Activated naive CD4-positive, alpha-beta T cell treated with anti-CD3 and anti-CD28 coated beads, Interleukin-2, amount 10 ng/mL, durations not matched to agents 7 days and 5 days (primary cell): ENCODE measurements at regions of chr1 and their contacts with region 1.

Region 1: DNA sequence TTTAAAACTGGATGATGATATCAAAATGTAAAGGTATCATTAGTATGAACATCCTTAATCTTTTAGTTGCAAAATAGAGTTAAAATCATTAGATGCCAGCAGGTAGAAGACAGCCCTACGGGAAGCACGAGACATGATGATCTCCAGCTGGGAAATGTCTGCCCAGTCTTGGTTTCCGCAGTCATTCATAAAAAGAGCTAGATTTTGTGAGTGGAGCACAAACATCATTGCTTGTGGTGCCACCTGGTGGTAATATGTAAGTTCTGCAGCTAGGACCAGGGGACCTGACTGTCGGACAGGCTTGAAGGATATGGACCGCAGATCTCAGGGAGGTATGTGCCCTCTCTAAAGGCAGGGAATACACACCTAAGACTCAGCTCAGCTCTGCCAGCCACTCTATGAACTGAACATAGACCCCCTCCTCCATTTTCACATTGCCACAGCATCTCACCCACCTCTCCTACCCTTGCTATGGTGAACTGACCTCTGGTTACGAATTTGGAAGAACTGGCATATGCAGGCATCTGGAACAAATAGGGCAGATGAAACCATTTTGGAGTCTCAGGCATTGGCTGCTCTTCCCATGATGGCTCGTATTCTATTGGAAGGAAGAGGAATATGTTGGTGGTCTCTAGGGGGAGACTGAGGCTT is 9.2 kb downstream of the FCMR start:
- DNase-seq: peak; percentile 75
- H3K4me3 Mint-ChIP-seq: no peak overlapping the region
- H3K27ac Mint-ChIP-seq: peak overlapping the region; percentile 28
- H3K4me1 Mint-ChIP-seq: peaks cover 91% of the 10 kb centered on the region
- H3K27me3 Mint-ChIP-seq: no peaks in the 10 kb centered on the region

Region 2: GRCh38 chr1:206635080-206635977 is 277.2 kb before region 1 on chr1 and contains the start of gene DYRK3:
- CTCF ChIA-PET with region 1: interaction called, 12 read pairs
- DNase-seq: peak; percentile 96
- H3K4me3 Mint-ChIP-seq: peak within 1 kb of the TSS; percentile 77
- H3K27ac Mint-ChIP-seq: peak within 1 kb of the TSS; percentile 85
- H3K4me1 Mint-ChIP-seq: peaks cover 26% of the 10 kb centered on the region
- H3K27me3 Mint-ChIP-seq: peaks cover 38% of the 10 kb centered on the region

Region 3: DNA sequence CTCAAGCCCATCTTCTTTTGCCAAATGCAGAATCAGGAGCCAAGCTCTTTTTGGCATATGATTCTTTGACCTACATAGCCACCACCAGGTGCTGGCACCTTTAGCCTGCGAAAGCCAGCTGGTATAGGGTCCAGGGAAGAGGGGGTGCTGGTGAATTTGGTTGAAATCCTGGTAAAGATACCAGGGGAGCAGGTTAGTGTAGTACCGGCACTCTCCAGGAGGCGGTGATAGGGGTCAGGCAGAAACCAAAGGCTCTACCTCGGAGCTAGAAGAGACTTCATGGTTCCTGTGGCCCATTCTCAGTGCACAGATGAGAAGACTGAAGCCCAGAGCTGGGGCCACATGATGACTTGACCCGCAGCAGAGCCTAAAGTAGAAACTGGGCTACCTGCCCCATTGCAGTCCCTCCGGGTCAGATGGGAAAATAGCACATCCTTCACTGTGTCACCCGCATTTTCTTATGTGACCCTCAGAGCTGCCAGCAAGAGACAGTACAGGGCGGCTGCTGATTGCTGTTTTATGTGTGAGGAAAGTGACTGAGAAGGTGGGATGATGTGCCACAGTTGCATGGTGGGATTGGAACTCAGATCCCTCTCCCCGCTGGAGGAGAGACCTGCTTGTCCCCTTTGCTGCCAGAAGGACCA is 177.9 kb before region 1 on chr1:
- CTCF ChIA-PET with region 1: interaction called, 233 read pairs
- DNase-seq: peak; percentile 87
- H3K4me3 Mint-ChIP-seq: no peak overlapping the region
- H3K27ac Mint-ChIP-seq: peak overlapping the region; percentile 14
- H3K4me1 Mint-ChIP-seq: peaks cover 61% of the 10 kb centered on the region
- H3K27me3 Mint-ChIP-seq: peaks cover 8% of the 10 kb centered on the region

Region 4: DNA sequence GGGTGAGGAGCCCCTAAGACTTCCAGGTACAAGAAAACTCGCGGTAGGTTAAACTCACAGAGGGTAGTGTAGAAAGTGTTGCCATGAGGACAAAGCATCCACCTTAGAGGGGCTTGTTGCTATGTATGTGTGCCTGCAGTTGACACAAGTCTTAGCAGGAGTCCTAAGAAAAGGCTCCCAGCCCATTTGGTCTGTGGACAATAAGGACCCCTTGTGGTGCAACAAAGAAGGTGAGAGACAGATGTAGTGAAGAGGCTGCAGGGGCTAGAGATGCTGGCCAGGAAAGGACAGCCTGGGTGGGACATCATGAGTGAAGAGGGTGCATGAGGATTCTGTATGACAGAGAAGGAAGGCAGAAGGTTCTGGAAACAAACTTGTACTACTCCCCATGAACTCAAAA is 104.0 kb before region 1 on chr1:
- CTCF ChIA-PET with region 1: interaction called, 216 read pairs
- DNase-seq: peak; percentile 66
- H3K4me3 Mint-ChIP-seq: no peak overlapping the region
- H3K27ac Mint-ChIP-seq: no peak overlapping the region
- H3K4me1 Mint-ChIP-seq: peaks cover 46% of the 10 kb centered on the region
- H3K27me3 Mint-ChIP-seq: peaks cover 9% of the 10 kb centered on the region

Region 5: GRCh38 chr1:206856674-206857464 is 55.7 kb before region 1 on chr1:
- CTCF ChIA-PET with region 1: interaction called, 19 read pairs
- DNase-seq: peak; percentile 36
- H3K4me3 Mint-ChIP-seq: no peak overlapping the region
- H3K27ac Mint-ChIP-seq: no peak overlapping the region
- H3K4me1 Mint-ChIP-seq: peaks cover 38% of the 10 kb centered on the region
- H3K27me3 Mint-ChIP-seq: peaks cover 34% of the 10 kb centered on the region

Region 6: DNA sequence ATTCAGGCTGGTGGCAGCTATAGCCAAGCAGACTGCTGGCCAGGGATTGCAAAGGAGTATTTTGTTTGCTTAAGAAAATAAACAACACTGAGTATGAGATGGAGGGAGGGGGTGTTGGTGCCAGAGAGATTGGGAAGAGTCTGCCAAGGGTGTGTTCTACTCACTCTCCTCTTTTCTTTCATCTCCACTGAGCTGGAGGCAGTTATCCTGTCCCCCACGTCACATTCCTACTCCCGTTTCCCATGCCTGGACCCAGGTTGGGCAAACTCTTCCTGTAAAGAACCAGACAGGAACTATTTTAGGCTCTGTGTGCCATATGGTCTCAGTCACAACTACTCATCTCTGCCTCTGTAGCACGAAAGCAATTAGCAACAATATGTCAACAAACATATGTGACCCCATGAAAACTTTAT is 16.7 kb before region 1 on chr1:
- CTCF ChIA-PET with region 1: interaction called, 15 read pairs
- DNase-seq: no peak
- H3K4me3 Mint-ChIP-seq: no peak overlapping the region
- H3K27ac Mint-ChIP-seq: no peak overlapping the region
- H3K4me1 Mint-ChIP-seq: peaks cover 27% of the 10 kb centered on the region
- H3K27me3 Mint-ChIP-seq: peaks cover 5% of the 10 kb centered on the region

Region 7: DNA sequence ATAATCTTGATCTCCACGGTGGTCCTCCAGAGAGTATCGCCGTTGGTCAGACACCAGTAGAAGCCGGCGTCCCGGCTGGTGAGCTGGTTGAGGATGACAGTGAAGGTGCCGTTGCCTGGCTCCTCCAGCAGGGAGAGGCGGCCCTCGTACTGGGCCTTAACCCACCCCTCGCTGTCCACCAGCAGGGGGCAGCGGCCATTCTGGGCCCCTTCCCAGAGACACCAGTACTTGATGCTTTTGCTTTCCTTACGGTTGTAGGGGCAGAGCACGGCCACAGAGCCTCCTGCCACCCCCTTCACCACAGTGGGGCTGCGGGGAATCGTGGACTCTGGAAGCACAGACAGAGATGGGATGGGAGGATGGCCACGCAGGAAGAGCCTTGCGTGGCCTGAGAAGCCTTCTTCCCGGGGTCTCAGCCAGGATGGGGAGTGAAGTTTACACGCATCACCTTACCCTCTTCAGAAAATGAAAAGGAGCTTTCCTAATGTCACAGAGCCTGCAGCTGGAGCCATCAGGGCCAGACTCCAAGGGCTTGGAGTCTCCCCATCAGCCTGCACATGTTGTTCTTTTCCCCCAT is 23.0 kb after region 1 on chr1:
- CTCF ChIA-PET with region 1: interaction called, 168 read pairs
- DNase-seq: peak; percentile 74
- H3K4me3 Mint-ChIP-seq: no peak overlapping the region
- H3K27ac Mint-ChIP-seq: no peak overlapping the region
- H3K4me1 Mint-ChIP-seq: peaks cover 14% of the 10 kb centered on the region
- H3K27me3 Mint-ChIP-seq: peaks cover 35% of the 10 kb centered on the region

Region 8: DNA sequence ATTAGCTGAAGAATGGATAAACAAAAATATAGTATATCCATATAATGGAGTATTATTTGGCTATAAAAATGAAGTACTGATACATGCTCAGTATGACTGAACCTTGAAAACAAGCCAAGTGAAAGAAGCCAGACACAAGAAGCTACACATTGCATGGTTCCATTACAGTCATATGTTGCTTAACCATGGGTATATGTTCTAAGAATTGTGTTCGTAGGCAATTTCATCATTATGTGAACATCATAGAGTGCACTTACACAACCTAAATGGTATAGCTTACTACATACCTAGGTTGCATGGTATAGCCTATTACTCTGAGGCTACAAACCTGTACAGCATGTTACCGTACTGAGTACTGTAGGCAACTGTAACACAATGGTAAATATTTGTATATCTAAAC is 86.2 kb after region 1 on chr1:
- CTCF ChIA-PET with region 1: no interaction called
- DNase-seq: no peak
- H3K4me3 Mint-ChIP-seq: no peak overlapping the region
- H3K27ac Mint-ChIP-seq: no peak overlapping the region
- H3K4me1 Mint-ChIP-seq: no peaks in the 10 kb centered on the region
- H3K27me3 Mint-ChIP-seq: peaks cover 33% of the 10 kb centered on the region

Region 9: GRCh38 chr1:207069858-207070506 is 157.4 kb after region 1 on chr1:
- CTCF ChIA-PET with region 1: no interaction called
- DNase-seq: no peak
- H3K4me3 Mint-ChIP-seq: no peak overlapping the region
- H3K27ac Mint-ChIP-seq: peak overlapping the region; percentile 78
- H3K4me1 Mint-ChIP-seq: peaks cover 46% of the 10 kb centered on the region
- H3K27me3 Mint-ChIP-seq: peaks cover 12% of the 10 kb centered on the region

Region 10: GRCh38 chr1:207084701-207085180 is 172.2 kb after region 1 on chr1:
- CTCF ChIA-PET with region 1: no interaction called
- DNase-seq: peak; percentile 68
- H3K4me3 Mint-ChIP-seq: no peak overlapping the region
- H3K27ac Mint-ChIP-seq: no peak overlapping the region
- H3K4me1 Mint-ChIP-seq: peaks cover 34% of the 10 kb centered on the region
- H3K27me3 Mint-ChIP-seq: peaks cover 13% of the 10 kb centered on the region